ENCODE measurements at regions of chr7 and their contacts with region 1.

Region 1: GRCh38 chr7:25259587-25260243 is 31.4 kb upstream of the NPVF start:
- DNase-seq: no peak
- H3K4me3 ChIP-seq: no peak overlapping the region
- H3K27me3 ChIP-seq: 0 out of 2 replicates have a peak, but pooled peaks cover 2% of the 10 kb centered on the region
- CTCF ChIP-seq: peak; percentile 86

Region 2: GRCh38 chr7:25234336-25234735 is 25.4 kb before region 1 on chr7:
- CTCF ChIA-PET with region 1: no interaction called
- POLR2A ChIA-PET with region 1: no interaction called
- DNase-seq: no peak
- H3K4me3 ChIP-seq: no peak overlapping the region
- H3K27me3 ChIP-seq: no peaks in the 10 kb centered on the region
- CTCF ChIP-seq: no peak

Region 3: GRCh38 chr7:25244254-25245033 is 15.3 kb before region 1 on chr7:
- CTCF ChIA-PET with region 1: interaction called, 11 read pairs
- POLR2A ChIA-PET with region 1: no interaction called
- DNase-seq: no peak
- H3K4me3 ChIP-seq: no peak overlapping the region
- H3K27me3 ChIP-seq: no peaks in the 10 kb centered on the region
- CTCF ChIP-seq: no peak

Region 4: DNA sequence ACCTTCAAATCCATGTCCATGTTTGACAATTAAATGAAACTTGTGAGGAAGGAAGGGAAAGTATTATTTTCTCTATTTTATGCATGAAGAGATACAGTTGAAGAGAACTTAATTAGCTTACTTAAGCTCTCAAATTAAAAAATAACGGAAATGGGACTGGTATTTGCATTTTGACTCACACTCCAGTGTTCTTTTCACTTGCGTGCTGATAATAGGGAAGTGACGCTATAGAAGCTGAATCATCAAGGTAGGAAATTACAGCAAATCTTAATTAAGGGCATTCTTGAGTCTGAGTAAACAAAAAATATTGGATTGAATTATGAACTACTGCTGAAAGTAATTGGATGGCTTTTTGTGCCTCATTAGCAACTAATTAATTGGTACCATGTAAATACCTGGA is 12.6 kb after region 1 on chr7:
- CTCF ChIA-PET with region 1: interaction called, 10 read pairs
- POLR2A ChIA-PET with region 1: no interaction called
- DNase-seq: no peak
- H3K4me3 ChIP-seq: no peak overlapping the region
- H3K27me3 ChIP-seq: no peaks in the 10 kb centered on the region
- CTCF ChIP-seq: no peak

Region 5: GRCh38 chr7:25389489-25390106 is 129.9 kb after region 1 on chr7:
- CTCF ChIA-PET with region 1: interaction called, 45 read pairs
- POLR2A ChIA-PET with region 1: no interaction called
- DNase-seq: no peak
- H3K4me3 ChIP-seq: no peak overlapping the region
- H3K27me3 ChIP-seq: no peaks in the 10 kb centered on the region; the same call in none of the 2 replicates
- CTCF ChIP-seq: peak; percentile 54

Region 6: GRCh38 chr7:25565949-25566348 is 306.2 kb after region 1 on chr7:
- CTCF ChIA-PET with region 1: interaction called, 49 read pairs
- POLR2A ChIA-PET with region 1: no interaction called
- DNase-seq: peak; percentile 15
- H3K4me3 ChIP-seq: no peak overlapping the region
- H3K27me3 ChIP-seq: peaks cover 3% of the 10 kb centered on the region; the same call in 1 of the 2 replicates
- CTCF ChIP-seq: peak; percentile 100